Right ventricle myocardium inferior (tissue), 1 donor: ENCODE measurements at regions of chr7 and their contacts with region 1.

Region 1: GRCh38 chr7:148962823-148963582 is 65.3 kb downstream of the PDIA4 start:
- DNase-seq: peak; percentile 77
- ATAC-seq: peak; percentile 86

Region 2: GRCh38 chr7:148262721-148263229 is 700.2 kb before region 1 on chr7:
- intact Hi-C with region 1: loop called (anchors 10 kb)
- DNase-seq: peak; percentile 75
- ATAC-seq: peak; percentile 80

Region 3: GRCh38 chr7:148503875-148504487 is 459.0 kb before region 1 on chr7:
- intact Hi-C with region 1: loop called (anchors 1 kb)
- DNase-seq: no peak
- ATAC-seq: no peak

Region 4: DNA sequence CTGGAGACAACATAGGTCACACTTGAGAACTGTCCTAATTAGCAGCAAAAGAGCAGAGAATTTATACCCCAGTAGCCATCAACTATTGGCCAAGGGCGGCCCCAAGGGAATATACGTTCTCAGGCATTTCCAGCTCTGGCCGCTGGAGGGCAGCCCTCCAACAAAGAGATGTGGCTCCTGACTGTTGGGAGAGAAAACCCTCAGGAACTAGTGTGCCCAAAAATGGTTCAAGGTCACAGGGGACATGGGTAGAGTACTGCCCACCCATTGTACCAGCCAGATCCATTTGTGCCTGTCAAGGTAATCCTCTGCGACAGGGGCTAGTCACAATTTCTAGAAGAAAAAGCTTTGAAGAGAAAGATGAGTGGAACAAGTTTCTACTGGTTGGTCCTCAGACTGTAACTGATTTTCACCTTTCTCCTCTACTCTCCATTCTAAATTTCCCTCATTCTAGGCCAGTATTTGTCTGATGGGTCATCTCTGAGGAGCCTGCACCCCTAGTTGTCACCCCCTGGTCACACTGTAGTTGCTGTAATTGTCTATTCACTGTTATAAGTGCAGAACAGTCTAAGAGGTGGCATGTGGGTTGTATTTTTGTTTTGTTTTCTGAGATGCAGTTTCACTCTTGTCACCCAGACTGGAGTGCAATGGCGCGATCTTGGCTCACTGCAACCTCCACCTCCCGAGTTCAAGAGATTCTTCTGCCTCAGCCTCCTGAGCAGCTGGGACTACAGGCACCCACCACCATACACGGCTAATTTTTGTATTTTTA is 387.2 kb before region 1 on chr7:
- intact Hi-C with region 1: loop called (anchors 1 kb)
- DNase-seq: peak; percentile 77
- ATAC-seq: peak; percentile 52

Region 5: DNA sequence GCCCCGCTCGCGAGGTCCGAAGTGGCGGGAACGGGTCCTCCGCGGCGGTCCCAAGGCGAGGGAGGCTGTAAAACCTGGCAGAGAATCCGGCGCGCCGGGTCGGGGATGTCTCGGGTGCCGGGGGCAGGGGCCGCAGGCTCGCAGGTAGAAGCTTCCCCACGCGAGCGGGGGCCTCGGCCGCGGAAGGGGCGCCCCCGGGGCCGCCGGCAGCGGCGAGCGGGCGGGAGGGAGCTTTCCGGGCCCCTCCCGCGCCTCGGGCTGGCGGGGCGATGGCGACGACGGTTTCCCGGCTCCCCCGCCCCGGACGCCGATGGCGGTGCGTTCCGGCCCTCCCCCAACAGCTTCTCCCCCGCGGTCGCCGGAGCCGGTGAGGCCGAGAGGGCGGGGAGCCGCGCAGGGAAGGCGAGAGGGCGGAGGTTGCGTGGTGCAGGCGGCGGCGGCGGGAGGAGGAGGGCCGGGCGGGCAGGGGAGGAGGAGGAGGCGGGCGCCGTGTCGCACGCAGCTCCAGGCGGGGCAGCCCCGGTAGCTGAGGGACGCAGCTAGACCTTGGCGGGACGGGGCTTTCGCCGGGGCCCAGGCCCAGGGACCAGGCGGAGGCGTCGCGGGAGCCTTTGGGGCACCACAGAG is 264.5 kb before region 1 on chr7 and contains the start of gene CUL1:
- intact Hi-C with region 1: loop called (anchors 10 kb)
- DNase-seq: peak; percentile 94
- ATAC-seq: peak; percentile 93
- total RNA-seq, gene CUL1: 46.4 TPM

Region 6: GRCh38 chr7:148856891-148857290 is 106.1 kb before region 1 on chr7:
- intact Hi-C with region 1: loop called (anchors 2 kb)
- DNase-seq: no peak
- ATAC-seq: no peak

Region 7: DNA sequence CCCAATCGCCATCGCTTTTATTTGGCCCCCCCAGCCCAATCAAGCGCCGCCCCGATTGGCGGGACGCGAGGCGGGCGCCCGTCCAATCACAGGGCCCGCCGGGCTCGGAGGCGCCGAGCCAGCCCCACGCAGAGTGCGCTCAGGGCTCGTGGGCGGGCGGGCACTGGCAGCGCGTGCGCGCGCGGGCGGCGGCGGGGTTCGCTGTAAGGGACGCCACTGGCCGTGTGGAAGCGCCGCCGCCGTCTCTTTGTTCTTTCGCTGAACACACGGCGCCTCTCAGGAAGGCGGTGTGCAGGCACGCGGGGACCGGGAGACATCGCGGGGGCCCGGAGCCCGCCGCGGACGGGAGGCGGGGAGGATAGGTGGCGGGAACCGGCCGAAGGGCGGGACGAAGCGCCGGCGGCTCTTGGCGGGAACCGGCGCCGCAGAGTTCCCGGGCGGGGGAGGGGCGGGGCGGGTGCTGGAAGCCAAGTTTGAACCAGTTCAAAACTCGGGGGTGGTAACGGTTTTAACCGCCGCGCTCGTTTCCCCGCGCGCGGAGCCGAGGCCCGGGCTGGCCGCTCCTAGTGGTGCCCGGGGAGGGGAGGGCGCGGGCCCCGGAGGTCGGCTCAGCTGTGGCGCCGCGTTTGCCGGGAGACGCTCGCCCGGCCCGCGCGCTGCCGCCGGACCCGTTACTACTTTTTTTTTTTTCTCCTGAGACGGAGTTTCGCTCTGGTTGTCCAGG is 78.5 kb before region 1 on chr7:
- intact Hi-C with region 1: loop called (anchors 5 kb)
- DNase-seq: peak; percentile 96
- ATAC-seq: peak; percentile 98